GM12878 (cell line): ENCODE measurements at regions of chr7 and their contacts with region 1.

Region 1: DNA sequence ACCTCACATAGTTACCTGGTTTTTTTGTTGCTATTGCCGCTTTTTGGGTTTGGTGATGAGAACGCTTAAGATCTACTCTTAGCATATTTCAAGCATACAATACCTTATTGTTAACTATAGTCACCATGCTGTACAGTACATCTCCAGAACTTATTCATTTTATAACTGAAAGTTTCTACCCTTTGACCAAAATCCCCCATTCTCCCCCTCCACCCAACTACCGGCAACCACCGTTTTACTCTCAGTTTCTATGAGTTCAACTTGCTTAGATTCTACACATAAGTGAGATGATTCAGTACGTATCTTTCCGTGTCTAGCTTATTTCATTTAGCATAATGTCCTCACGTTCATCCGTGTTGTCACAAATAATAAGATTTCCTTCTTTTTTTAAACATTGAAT is 86.7 kb upstream of the IL6 start:
- DNase-seq: peak; percentile 60
- ATAC-seq: peak; percentile 96
- H3K4me3 ChIP-seq: no peak overlapping the region
- H3K27ac ChIP-seq: no peak overlapping the region
- H3K4me1 ChIP-seq: no peaks in the 10 kb centered on the region
- H3K27me3 ChIP-seq: no peaks in the 10 kb centered on the region
- CTCF ChIP-seq: no peak
- EP300 ChIP-seq: peak; percentile 33 to 75; a peak in 2 of 4 replicates
- POLR2A ChIP-seq: no peak
- RAD21 ChIP-seq: no peak

Region 2: DNA sequence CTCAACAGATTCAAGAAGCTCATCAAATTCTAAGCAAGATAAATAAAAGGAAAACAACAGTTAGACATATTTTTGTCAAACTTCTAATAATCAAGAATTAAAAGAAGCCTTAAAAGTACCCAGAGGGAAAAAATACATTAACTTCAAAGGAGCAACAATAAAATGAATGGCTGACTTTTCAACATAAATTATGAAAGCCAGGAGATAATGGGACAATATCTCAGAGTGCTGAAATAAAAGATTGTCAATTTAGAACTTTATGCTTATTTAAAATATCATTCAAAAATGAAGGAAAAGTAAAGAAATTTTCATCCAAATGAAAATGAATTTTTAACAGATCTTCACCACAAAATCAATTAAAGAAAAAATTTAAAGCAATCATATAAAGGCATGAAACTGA is 21.7 kb before region 1 on chr7:
- CTCF ChIA-PET with region 1: no interaction called
- POLR2A ChIA-PET with region 1: no interaction called
- RAD21 ChIA-PET with region 1: no interaction called
- SMC1A ChIA-PET with region 1: no interaction called
- in situ Hi-C with region 1: no loop called
- intact Hi-C with region 1: no loop called
- DNase-seq: no peak
- ATAC-seq: no peak
- H3K4me3 ChIP-seq: no peak overlapping the region
- H3K27ac ChIP-seq: no peak overlapping the region
- H3K4me1 ChIP-seq: no peaks in the 10 kb centered on the region
- H3K27me3 ChIP-seq: no peaks in the 10 kb centered on the region
- CTCF ChIP-seq: no peak
- EP300 ChIP-seq: no peak
- POLR2A ChIP-seq: no peak
- RAD21 ChIP-seq: no peak

Region 3: DNA sequence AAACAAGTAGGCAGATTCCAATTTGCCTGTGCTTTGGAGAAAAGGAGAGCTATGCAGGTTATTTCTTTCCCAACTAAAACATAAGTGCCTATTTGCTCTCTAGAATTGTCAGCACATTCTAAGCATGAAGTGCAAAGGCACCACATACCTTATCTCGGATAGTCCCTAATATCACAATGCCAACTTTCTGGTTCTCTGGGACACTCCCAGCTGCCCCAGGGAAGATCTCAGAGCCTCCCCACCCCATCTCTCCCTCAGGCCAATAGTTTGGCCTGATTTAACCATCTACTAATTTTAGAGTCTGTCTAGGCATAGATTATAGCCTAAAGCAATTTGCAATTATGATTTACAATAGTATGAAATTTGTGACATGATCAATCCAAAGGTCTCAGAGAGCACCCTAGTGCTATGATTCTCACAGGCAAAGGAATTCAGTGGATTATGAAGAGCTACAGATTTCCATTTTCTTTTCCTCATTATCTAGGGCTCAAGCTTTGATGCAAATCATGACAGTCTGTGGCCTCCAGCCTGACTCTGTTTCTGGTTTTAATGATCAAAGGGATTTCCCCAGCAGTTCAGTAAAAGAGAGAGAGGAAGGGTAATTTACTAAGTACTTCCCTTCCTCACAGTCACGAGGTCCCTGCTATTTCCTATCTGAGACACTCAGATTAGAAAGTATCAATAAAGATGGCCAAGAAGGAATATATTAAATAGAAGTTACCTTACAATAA is 57.8 kb after region 1 on chr7:
- CTCF ChIA-PET with region 1: no interaction called
- POLR2A ChIA-PET with region 1: no interaction called
- RAD21 ChIA-PET with region 1: no interaction called
- SMC1A ChIA-PET with region 1: no interaction called
- in situ Hi-C with region 1: no loop called
- intact Hi-C with region 1: loop called (anchors 2 kb)
- DNase-seq: peak; percentile 45
- ATAC-seq: peak; percentile 88
- H3K4me3 ChIP-seq: no peak overlapping the region
- H3K27ac ChIP-seq: no peak overlapping the region
- H3K4me1 ChIP-seq: peaks cover 20% of the 10 kb centered on the region
- H3K27me3 ChIP-seq: no peaks in the 10 kb centered on the region
- CTCF ChIP-seq: no peak
- EP300 ChIP-seq: no peak
- POLR2A ChIP-seq: no peak
- RAD21 ChIP-seq: no peak

Region 4: DNA sequence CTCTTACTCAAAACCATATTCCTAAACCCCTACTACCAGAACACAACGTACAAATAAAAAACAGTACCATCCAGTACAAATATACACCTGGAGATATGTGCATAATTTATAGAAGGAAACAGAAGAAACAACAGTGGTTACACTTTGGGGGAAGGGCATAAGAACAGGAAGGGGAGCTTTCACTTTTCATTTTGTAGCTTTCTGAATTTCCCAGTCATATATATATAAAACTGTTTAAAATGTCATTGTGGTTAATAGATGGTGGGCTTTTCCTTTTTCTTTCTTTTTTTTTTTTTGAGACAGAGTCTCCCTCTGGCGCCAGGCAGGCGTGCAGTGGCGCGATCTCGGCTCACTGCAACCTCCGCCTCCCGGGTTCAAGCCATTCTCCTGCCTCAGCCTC is 706.0 kb after region 1 on chr7:
- CTCF ChIA-PET with region 1: no interaction called
- POLR2A ChIA-PET with region 1: no interaction called
- RAD21 ChIA-PET with region 1: no interaction called
- SMC1A ChIA-PET with region 1: no interaction called
- in situ Hi-C with region 1: no loop called
- intact Hi-C with region 1: no loop called
- DNase-seq: no peak
- ATAC-seq: peak; percentile 84
- H3K4me3 ChIP-seq: 0 out of 2 replicates have a peak overlapping the region, but pooled peaks have one; percentile 21
- H3K27ac ChIP-seq: peak overlapping the region; percentile 56
- H3K4me1 ChIP-seq: peaks cover 9% of the 10 kb centered on the region
- H3K27me3 ChIP-seq: no peaks in the 10 kb centered on the region
- CTCF ChIP-seq: no peak
- EP300 ChIP-seq: no peak
- POLR2A ChIP-seq: no peak
- RAD21 ChIP-seq: no peak